ENCODE measurements at regions of chr5 and their contacts with region 1.

Region 1: GRCh38 chr5:179623003-179623880 is at the start of gene HNRNPH1:
- DNase-seq: peak; percentile 95
- ATAC-seq: peak; percentile 77
- H3K4me3 Mint-ChIP-seq: peak within 1 kb of the TSS; percentile 100
- H3K27ac Mint-ChIP-seq: peak within 1 kb of the TSS; percentile 100
- H3K4me1 Mint-ChIP-seq: peaks cover 36% of the 10 kb centered on the region
- H3K27me3 Mint-ChIP-seq: no peaks in the 10 kb centered on the region
- total RNA-seq, gene HNRNPH1: 1,103 to 1,162 TPM

Region 2: GRCh38 chr5:179550511-179551230 is 72.6 kb before region 1 on chr5 and contains the start of gene RUFY1:
- POLR2A ChIA-PET with region 1: interaction called, 32 read pairs
- DNase-seq: peak; percentile 96
- ATAC-seq: peak; percentile 90
- H3K4me3 Mint-ChIP-seq: peak within 1 kb of the TSS; percentile 98
- H3K27ac Mint-ChIP-seq: peak within 1 kb of the TSS; percentile 98
- H3K4me1 Mint-ChIP-seq: peaks cover 21% of the 10 kb centered on the region
- H3K27me3 Mint-ChIP-seq: no peaks in the 10 kb centered on the region
- total RNA-seq, gene RUFY1: 43.0 to 48.9 TPM

Region 3: GRCh38 chr5:179608131-179608581 is 15.1 kb before region 1 on chr5:
- POLR2A ChIA-PET with region 1: interaction called, 144 read pairs
- DNase-seq: peak; percentile 62
- ATAC-seq: peak; percentile 94
- H3K4me3 Mint-ChIP-seq: peak overlapping the region; percentile 30
- H3K27ac Mint-ChIP-seq: peak overlapping the region; percentile 75
- H3K4me1 Mint-ChIP-seq: peaks cover 37% of the 10 kb centered on the region
- H3K27me3 Mint-ChIP-seq: no peaks in the 10 kb centered on the region

Region 4: GRCh38 chr5:179678223-179679013 is 55.2 kb after region 1 on chr5:
- POLR2A ChIA-PET with region 1: interaction called, 33 read pairs
- DNase-seq: peak; percentile 95
- ATAC-seq: peak; percentile 93
- H3K4me3 Mint-ChIP-seq: peak overlapping the region; percentile 99
- H3K27ac Mint-ChIP-seq: peak overlapping the region; percentile 99
- H3K4me1 Mint-ChIP-seq: peaks cover 16% of the 10 kb centered on the region
- H3K27me3 Mint-ChIP-seq: no peaks in the 10 kb centered on the region

Region 5: DNA sequence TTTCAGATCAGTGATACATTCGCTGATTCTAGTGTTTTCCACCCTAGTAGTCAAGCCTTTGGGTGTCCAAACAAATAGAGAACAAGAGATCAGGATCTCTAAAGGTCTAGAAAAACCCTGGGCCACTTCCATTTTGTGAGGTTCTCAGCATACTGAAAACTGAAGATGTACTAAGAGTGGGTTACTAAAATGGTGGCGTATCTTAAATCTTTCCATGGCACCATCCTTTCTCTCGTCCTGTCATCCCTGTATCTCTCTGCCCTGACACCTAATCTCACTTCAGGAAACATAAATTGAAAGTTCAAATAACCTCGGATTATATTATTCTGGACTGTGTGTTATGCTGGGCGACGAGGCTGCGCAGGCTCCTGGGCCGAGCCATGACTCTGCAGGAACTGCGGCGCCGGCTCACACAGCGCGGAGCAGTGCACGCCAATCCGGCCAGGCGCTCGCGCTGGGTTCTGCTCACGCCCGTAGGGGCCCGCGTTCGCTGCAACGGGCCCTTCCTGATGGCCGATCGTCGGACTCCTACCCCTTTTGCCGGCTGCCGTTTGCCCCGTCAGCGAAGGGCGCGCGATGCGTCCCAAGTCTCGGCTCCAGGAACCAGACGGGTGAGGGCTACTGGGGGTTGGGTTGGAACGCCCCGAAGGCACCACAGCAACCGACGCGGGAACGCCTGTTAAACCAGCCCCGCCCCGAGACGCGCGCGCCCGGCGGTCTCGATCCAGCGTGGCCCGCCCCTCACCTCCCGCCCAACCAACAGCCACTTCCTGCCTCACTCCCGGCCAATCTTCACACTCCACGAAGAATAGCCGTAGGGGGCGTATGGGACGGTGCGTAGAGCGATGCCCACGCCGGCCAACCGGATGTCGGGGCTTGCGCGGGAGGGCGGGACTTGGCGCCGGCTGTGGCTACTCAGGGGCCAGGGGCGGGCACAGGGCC is 75.0 kb after region 1 on chr5:
- POLR2A ChIA-PET with region 1: interaction called, 10 read pairs
- DNase-seq: peak; percentile 98
- ATAC-seq: peak; percentile 92
- H3K4me3 Mint-ChIP-seq: peak overlapping the region; percentile 95
- H3K27ac Mint-ChIP-seq: peak overlapping the region; percentile 97
- H3K4me1 Mint-ChIP-seq: peaks cover 23% of the 10 kb centered on the region
- H3K27me3 Mint-ChIP-seq: no peaks in the 10 kb centered on the region

Region 6: GRCh38 chr5:179716286-179716685 is 93.0 kb after region 1 on chr5:
- POLR2A ChIA-PET with region 1: no interaction called
- DNase-seq: no peak
- ATAC-seq: no peak
- H3K4me3 Mint-ChIP-seq: no peak overlapping the region
- H3K27ac Mint-ChIP-seq: no peak overlapping the region
- H3K4me1 Mint-ChIP-seq: peaks cover 6% of the 10 kb centered on the region
- H3K27me3 Mint-ChIP-seq: no peaks in the 10 kb centered on the region

Region 7: DNA sequence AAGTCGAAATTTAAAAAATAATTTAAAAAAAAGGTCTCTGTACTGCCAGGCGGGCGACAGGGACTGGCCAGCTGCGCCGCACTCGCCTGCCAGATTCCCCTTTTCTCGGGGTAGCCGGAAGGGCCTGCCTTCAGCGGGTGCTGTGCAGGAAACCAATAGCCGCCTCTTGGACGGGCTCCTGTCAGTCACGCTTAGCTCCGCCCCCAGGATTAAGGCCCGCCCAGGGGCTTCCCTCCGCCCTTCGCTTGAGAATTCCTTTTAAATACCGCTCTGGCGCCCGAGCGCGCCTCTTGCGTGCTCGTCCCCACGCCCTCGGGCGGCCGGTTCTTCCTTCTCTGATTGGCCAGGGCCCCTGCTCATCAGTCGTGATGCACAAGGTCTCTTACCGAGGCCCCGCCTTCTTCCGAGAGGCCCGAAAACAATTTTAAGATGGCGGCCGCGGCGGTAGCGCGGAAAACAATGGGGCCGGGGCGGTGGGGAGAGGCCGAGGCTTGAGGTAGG is 109.2 kb after region 1 on chr5 and contains the start of gene MAML1:
- POLR2A ChIA-PET with region 1: interaction called, 18 read pairs
- DNase-seq: peak; percentile 98
- ATAC-seq: peak; percentile 97
- H3K4me3 Mint-ChIP-seq: peak within 1 kb of the TSS; percentile 95
- H3K27ac Mint-ChIP-seq: peak within 1 kb of the TSS; percentile 87
- H3K4me1 Mint-ChIP-seq: peaks cover 18% of the 10 kb centered on the region
- H3K27me3 Mint-ChIP-seq: no peaks in the 10 kb centered on the region
- total RNA-seq, gene MAML1: 38.5 TPM